K562 (cell line): ENCODE measurements at regions of chr10 and their contacts with region 1.

Region 1: GRCh38 chr10:92880233-92880861 is 32.0 kb downstream of the EXOC6 start:
- DNase-seq: peak in 2 of 4 experiments; percentile 14 to 47
- ATAC-seq: peak; percentile 81
- H3K4me3 ChIP-seq: no peak overlapping the region
- H3K27ac ChIP-seq: no peak overlapping the region
- H3K4me1 ChIP-seq: peaks cover 0 to 16% of the 10 kb centered on the region in 2 experiments; a peak in 3 of 5 replicates
- H3K27me3 ChIP-seq: no peaks in the 10 kb centered on the region
- CTCF ChIP-seq: peak; percentile 30 to 55 (median 30); a peak in 3 of 6 replicates
- EP300 ChIP-seq: no peak
- POLR2A ChIP-seq: no peak
- RAD21 ChIP-seq: peak; percentile 51 to 56; a peak in 3 of 4 replicates

Region 2: DNA sequence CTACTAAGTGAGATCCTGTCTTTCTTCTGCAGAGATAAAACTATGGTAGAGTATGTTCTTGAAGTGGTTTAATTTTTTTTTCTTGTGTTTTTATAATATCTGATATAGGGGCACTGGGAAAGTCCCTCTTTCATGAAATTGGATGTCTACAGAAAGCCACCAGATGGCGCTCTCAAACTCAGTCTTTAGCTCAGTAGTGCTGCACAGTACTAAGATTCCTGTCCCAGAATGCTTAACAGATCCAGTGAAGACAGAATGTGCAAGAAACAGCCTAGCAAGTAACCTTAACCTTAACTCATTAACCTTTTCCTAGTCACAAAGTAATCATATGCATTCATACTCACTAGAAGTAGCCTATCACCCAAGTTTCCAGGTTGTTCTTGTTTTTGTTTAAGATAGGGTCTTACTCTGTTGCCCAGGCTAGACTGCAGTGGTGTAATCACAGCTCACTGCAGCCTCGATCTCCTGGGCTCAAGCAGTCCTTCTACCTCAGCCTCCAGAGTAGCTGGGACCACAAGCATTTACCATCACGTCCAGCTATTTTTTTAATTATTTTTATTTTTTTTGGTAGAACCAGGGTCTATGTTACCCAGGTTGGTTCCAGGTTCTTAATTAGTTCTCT is 363.2 kb before region 1 on chr10:
- CTCF ChIA-PET with region 1: interaction called, 6 read pairs
- POLR2A ChIA-PET with region 1: no interaction called
- in situ Hi-C with region 1: no loop called
- intact Hi-C with region 1: loop called (anchors 5 kb)
- DNase-seq: peak; percentile 18 to 78 (median 27)
- ATAC-seq: peak; percentile 97
- H3K4me3 ChIP-seq: no peak overlapping the region
- H3K27ac ChIP-seq: no peak overlapping the region
- H3K4me1 ChIP-seq: peaks cover 0 to 2% of the 10 kb centered on the region in 2 experiments; a peak in 1 of 5 replicates
- H3K27me3 ChIP-seq: no peaks in the 10 kb centered on the region
- CTCF ChIP-seq: peak; percentile 61 to 71 (median 65)
- EP300 ChIP-seq: no peak
- POLR2A ChIP-seq: no peak
- RAD21 ChIP-seq: peak; percentile 63 to 79

Region 3: GRCh38 chr10:92848441-92849233 is 31.7 kb before region 1 on chr10 and contains the start of gene EXOC6:
- CTCF ChIA-PET with region 1: no interaction called
- POLR2A ChIA-PET with region 1: interaction called, 3 read pairs
- in situ Hi-C with region 1: no loop called
- intact Hi-C with region 1: loop called (anchors 1 kb)
- DNase-seq: peak; percentile 76 to 87 (median 81)
- ATAC-seq: peak; percentile 87
- H3K4me3 ChIP-seq: peak within 1 kb of the TSS; percentile 94
- H3K27ac ChIP-seq: peak within 1 kb of the TSS; percentile 92
- H3K4me1 ChIP-seq: peaks cover 9 to 13% of the 10 kb centered on the region in 2 experiments; a peak in 4 of 5 replicates
- H3K27me3 ChIP-seq: no peaks in the 10 kb centered on the region
- CTCF ChIP-seq: 0 out of 6 replicates have a peak, but pooled peaks of 1 of the 3 experiments have one; percentile 4
- EP300 ChIP-seq: no peak
- POLR2A ChIP-seq: peak; percentile 63; the same call in 1 of the 2 replicates
- RAD21 ChIP-seq: no peak
- polyA plus RNA-seq, gene EXOC6: 13.9 to 17.0 TPM

Region 4: DNA sequence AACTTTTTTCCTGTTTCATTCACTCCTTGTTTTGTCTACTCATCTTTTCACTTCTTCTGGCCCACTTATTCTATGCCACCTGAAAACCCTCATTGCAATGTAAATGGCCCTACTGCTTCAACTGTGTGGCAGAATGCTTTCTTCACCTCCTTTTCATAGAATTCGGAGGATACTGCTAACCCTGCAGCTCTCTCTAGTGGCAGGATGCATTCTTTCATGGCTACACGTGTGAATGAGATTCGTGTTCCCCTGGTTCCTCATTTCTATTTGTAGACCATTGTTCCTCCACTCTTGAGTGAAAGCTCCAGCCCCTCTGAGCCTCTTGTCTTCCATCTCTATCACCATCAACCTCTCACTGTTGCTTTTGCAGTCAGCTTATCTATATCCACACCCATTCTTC is 159.4 kb after region 1 on chr10:
- CTCF ChIA-PET with region 1: interaction called, 4 read pairs
- POLR2A ChIA-PET with region 1: no interaction called
- in situ Hi-C with region 1: no loop called
- intact Hi-C with region 1: loop called (anchors 2 kb)
- DNase-seq: peak in 2 of 4 experiments; percentile 18 to 47
- ATAC-seq: peak; percentile 87
- H3K4me3 ChIP-seq: no peak overlapping the region
- H3K27ac ChIP-seq: no peak overlapping the region
- H3K4me1 ChIP-seq: no peaks in the 10 kb centered on the region; a peak in 2 of 5 replicates
- H3K27me3 ChIP-seq: no peaks in the 10 kb centered on the region
- CTCF ChIP-seq: peak; percentile 53 to 67 (median 67)
- EP300 ChIP-seq: no peak
- POLR2A ChIP-seq: no peak
- RAD21 ChIP-seq: peak; percentile 9 to 76; a peak in 2 of 4 replicates

Region 5: DNA sequence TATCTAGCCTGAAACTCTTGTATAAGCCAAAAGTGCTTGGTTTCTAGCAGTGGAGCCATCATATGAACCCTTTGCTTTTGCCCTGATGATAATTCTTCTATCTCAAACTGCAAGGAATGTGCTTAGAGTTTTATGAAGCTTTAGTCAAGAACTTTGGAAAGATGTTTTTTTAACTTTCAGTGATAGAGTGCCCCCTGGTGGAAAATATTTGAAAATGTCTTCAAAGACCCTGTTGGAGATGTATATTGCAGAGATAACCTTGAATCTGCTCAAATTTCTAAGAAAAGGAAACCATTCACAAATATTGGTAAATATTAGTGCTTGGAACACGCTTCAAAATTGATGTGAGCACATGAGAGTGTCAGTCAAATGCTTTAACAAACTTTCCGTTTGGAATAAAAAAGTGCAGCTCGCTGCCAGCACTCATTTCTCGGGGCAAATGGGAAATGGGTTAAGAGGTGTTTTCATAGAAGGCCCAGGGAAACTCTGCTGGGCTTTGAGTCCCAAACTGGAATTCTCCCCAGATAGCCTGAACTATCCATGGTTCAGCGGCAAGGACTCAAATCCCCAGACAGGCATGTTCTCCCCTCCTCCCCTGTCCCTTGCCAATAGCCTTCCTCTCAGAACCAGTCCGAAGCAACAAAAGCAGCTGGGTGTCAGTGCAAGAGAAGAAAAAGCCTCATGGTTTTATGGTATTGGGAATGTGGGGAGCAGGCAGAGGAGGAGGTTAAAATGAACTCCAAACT is 472.5 kb after region 1 on chr10:
- CTCF ChIA-PET with region 1: interaction called, 3 read pairs
- POLR2A ChIA-PET with region 1: no interaction called
- in situ Hi-C with region 1: no loop called
- intact Hi-C with region 1: loop called (anchors 10 kb)
- DNase-seq: peak; percentile 31 to 45 (median 36)
- ATAC-seq: 0 out of 3 replicates have a peak, but pooled peaks have one; percentile 38
- H3K4me3 ChIP-seq: no peak overlapping the region
- H3K27ac ChIP-seq: no peak overlapping the region
- H3K4me1 ChIP-seq: no peaks in the 10 kb centered on the region
- H3K27me3 ChIP-seq: peaks cover 2 to 11% of the 10 kb centered on the region in 2 experiments; a peak in 3 of 5 replicates
- CTCF ChIP-seq: peak in 2 of 3 experiments; percentile 39 to 61; a peak in 4 of 6 replicates
- EP300 ChIP-seq: no peak
- POLR2A ChIP-seq: no peak
- RAD21 ChIP-seq: peak; percentile 59 to 70